ENCODE measurements at regions of chr10 and their contacts with region 1.

Region 1: DNA sequence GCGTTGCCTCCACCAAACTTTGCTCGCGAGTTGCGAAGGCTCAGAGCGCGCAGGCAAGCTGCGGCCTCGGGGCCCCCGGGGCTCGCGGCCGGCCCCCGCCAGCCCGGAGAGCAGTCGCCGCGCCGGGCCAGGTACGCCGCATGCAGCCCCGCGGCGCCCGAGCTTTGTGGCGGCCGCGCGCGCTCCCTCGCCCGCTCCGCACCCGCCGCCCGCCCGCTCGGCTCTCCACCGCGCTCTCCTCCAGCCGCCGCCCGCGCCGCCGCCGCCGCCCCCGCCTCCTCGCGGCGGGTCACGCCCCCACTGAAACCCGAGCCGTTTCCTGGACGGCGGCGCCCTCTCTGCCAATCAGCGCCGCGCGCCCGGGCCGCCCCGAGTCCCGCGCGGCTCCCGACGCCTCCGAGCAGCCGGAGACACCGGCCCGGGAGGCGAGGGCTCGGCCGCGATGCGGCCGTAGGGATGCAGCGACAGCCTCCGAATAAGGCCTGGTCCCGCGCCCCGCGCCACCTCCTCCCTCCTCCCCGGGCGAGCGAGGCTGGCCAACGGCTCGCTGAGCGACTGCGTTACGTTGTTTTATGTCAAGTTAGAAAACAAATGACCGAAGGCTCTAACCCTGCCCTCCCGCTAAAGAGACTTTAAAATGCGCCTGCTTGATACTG is at the start of gene FGFR2:
- DNase-seq: peak; percentile 83 to 92 (median 85)
- ATAC-seq: peak; percentile 96
- H3K4me3 ChIP-seq: peak within 1 kb of the TSS; percentile 52
- H3K4me1 ChIP-seq: no peaks in the 10 kb centered on the region
- CTCF ChIP-seq: no peak
- total RNA-seq, gene FGFR2: 64.3 to 138 (median 77.5) TPM

Region 2: DNA sequence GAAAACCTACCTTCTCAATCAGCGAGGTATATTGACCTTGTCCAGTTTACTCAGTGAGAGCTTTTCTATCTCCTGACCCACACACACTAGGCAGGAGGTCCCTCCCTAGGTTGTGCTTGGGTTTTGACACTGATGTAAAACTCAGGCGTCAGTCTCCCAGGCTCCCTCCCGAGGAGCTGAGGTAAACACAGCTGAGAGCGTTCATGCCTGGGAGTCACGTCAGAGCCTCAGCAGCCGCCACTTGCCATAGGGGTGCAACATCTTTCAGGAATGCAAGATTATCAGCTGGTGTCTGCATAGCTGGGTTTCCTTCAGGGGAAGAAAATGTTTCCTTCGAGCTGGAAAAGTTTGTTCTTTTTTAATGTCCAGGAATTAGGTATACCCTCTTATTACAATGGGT is 70.7 kb before region 1 on chr10:
- intact Hi-C with region 1: loop called (anchors 10 kb)
- DNase-seq: no peak
- ATAC-seq: no peak
- H3K4me3 ChIP-seq: no peak overlapping the region
- H3K4me1 ChIP-seq: peaks cover 24% of the 10 kb centered on the region
- CTCF ChIP-seq: no peak

Region 3: DNA sequence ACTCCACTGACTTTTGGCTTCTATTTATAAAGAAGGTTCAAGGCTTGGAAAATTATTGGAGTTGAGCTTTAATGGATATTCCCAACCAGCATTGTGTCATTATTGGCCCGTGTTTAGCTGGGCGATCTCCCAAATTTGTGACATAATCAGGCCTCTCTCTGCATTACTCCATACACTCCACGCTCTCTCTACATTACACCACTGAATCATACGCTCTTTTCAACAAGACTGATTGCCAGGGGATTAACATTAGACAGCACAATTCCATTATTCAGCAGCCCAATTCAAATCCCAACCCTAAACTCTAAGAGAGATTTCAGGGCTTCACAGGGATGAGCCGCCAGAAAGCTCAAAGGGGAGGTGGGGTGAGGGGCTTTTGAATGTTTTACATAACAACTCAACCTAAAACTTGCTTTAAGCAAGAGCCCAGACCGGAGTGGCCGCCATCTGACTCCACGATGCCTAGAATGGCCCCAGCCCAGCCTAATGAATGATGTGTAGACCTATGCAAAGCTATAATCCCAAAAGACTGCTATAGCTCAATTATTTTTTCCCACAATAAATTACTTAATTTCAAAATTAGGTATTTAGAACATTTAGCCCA is 61.9 kb before region 1 on chr10:
- intact Hi-C with region 1: loop called in 1 of 2 experiments (anchors 10 kb)
- DNase-seq: peak in 1 of 3 donors; percentile 29
- ATAC-seq: peak; percentile 25
- H3K4me3 ChIP-seq: no peak overlapping the region
- H3K4me1 ChIP-seq: no peaks in the 10 kb centered on the region
- CTCF ChIP-seq: no peak

Region 4: GRCh38 chr10:121771966-121772365 is 173.6 kb after region 1 on chr10:
- intact Hi-C with region 1: no loop called
- DNase-seq: no peak
- ATAC-seq: no peak
- H3K4me3 ChIP-seq: no peak overlapping the region
- H3K4me1 ChIP-seq: no peaks in the 10 kb centered on the region
- CTCF ChIP-seq: no peak